Caco-2 (cell line): ENCODE measurements at regions of chr6 and their contacts with region 1.

Region 1: GRCh38 chr6:120826253-120826652 is 508.0 kb downstream of the TBC1D32 start:
- DNase-seq: peak; percentile 47 to 63
- H3K4me3 ChIP-seq: no peak overlapping the region
- H3K4me3 Mint-ChIP-seq: no peak overlapping the region
- H3K27ac Mint-ChIP-seq: no peak overlapping the region
- H3K4me1 ChIP-seq: no peaks in the 10 kb centered on the region
- H3K4me1 Mint-ChIP-seq: no peaks in the 10 kb centered on the region
- H3K27me3 ChIP-seq: no peaks in the 10 kb centered on the region
- H3K27me3 Mint-ChIP-seq: no peaks in the 10 kb centered on the region
- CTCF ChIP-seq: peak; percentile 69 to 76

Region 2: DNA sequence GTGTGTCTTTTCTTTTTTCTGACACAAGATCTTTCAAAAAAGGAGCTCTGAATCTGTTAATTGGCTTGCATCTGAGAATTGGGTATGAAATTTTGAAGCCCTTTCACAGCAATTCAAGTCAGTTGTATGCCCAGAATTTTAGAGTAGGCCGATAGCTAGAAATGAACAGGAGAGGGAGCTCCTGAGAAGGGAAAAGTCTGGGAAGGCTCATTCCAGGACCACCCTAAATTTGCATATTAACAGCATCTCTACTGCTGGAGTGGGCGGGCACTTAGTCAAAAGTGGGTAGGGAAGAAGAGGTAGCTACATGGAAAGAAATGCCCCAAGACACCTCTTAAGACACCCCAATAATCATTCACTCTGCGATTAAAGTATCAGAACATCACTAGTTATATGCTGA is 420.3 kb before region 1 on chr6:
- CTCF ChIA-PET with region 1: no interaction called
- POLR2A ChIA-PET with region 1: no interaction called
- intact Hi-C with region 1: loop called (anchors 1 kb)
- DNase-seq: peak in 1 of 2 experiments; percentile 7
- H3K4me3 ChIP-seq: no peak overlapping the region
- H3K4me3 Mint-ChIP-seq: no peak overlapping the region
- H3K27ac Mint-ChIP-seq: no peak overlapping the region
- H3K4me1 ChIP-seq: no peaks in the 10 kb centered on the region
- H3K4me1 Mint-ChIP-seq: no peaks in the 10 kb centered on the region
- H3K27me3 ChIP-seq: no peaks in the 10 kb centered on the region
- H3K27me3 Mint-ChIP-seq: no peaks in the 10 kb centered on the region
- CTCF ChIP-seq: peak in 1 of 2 experiments; percentile 31